Endothelial cell of umbilical vein (primary cell): ENCODE measurements at regions of chr1 and their contacts with region 1.

Region 1: GRCh38 chr1:28369371-28370238 is at the start of gene PHACTR4:
- DNase-seq: peak; percentile 90
- H3K4me3 ChIP-seq: peak within 1 kb of the TSS; percentile 67 to 90 (median 83)
- H3K27ac ChIP-seq: peak within 1 kb of the TSS; percentile 67
- H3K4me1 ChIP-seq: peaks cover 9% of the 10 kb centered on the region
- H3K27me3 ChIP-seq: no peaks in the 10 kb centered on the region
- CTCF ChIP-seq: no peak
- POLR2A ChIP-seq: peak; percentile 96
- total RNA-seq, gene PHACTR4: 59.7 and 61.0 TPM in 2 replicates

Region 2: DNA sequence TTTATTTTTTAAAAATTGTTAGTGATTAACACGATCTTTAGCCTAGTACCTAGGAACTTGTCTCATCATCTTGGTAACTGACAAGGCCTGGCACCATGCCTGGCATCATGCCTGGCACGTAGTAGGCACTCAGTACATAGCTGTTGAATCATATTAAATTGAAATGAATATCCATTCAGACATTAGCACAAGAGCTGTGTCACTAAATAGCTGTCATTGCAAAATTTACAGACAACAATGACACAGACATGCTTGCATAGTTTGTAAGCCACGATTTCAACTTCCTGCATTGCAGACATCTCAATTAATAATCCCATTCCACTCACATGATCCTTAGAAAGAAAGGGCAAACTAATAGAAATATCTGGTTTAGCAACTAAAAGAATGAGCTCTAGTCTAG is 15.5 kb before region 1 on chr1:
- CTCF ChIA-PET with region 1: interaction called, 54 read pairs
- POLR2A ChIA-PET with region 1: no interaction called
- dilution Hi-C with region 1: no loop called
- intact Hi-C with region 1: no loop called
- DNase-seq: no peak
- H3K4me3 ChIP-seq: no peak overlapping the region
- H3K27ac ChIP-seq: no peak overlapping the region
- H3K4me1 ChIP-seq: no peaks in the 10 kb centered on the region
- H3K27me3 ChIP-seq: no peaks in the 10 kb centered on the region
- CTCF ChIP-seq: no peak
- POLR2A ChIP-seq: no peak

Region 3: GRCh38 chr1:28505406-28506187 is 136.0 kb after region 1 on chr1 and contains the start of gene RCC1:
- CTCF ChIA-PET with region 1: no interaction called
- POLR2A ChIA-PET with region 1: interaction called, 4 read pairs
- dilution Hi-C with region 1: no loop called
- intact Hi-C with region 1: loop called (anchors 5 kb)
- DNase-seq: peak; percentile 100
- H3K4me3 ChIP-seq: peak within 1 kb of the TSS; percentile 58 to 100 (median 87)
- H3K27ac ChIP-seq: peak within 1 kb of the TSS; percentile 78
- H3K4me1 ChIP-seq: peaks cover 29% of the 10 kb centered on the region
- H3K27me3 ChIP-seq: no peaks in the 10 kb centered on the region
- CTCF ChIP-seq: no peak
- POLR2A ChIP-seq: peak; percentile 100
- total RNA-seq, gene RCC1: 72.7 and 77.7 TPM in 2 replicates

Region 4: GRCh38 chr1:28552758-28553663 is 183.4 kb after region 1 on chr1 and contains the start of gene TRNAU1AP:
- CTCF ChIA-PET with region 1: interaction called, 3 read pairs
- POLR2A ChIA-PET with region 1: no interaction called
- dilution Hi-C with region 1: no loop called
- intact Hi-C with region 1: loop called (anchors 2 kb)
- DNase-seq: peak; percentile 98
- H3K4me3 ChIP-seq: peak within 1 kb of the TSS; percentile 79 to 86 (median 85)
- H3K27ac ChIP-seq: peak within 1 kb of the TSS; percentile 39
- H3K4me1 ChIP-seq: peaks cover 12% of the 10 kb centered on the region
- H3K27me3 ChIP-seq: no peaks in the 10 kb centered on the region
- CTCF ChIP-seq: no peak
- POLR2A ChIP-seq: peak; percentile 86
- total RNA-seq, gene TRNAU1AP: 46.2 and 49.0 TPM in 2 replicates